ENCODE measurements at regions of chr19 and their contacts with region 1.

Region 1: GRCh38 chr19:8085598-8086408 is 33.2 kb downstream of the CCL25 start:
- DNase-seq: peak; percentile 91 to 94 (median 92)
- ATAC-seq: peak; percentile 91
- H3K4me3 ChIP-seq: peak overlapping the region; percentile 31
- H3K27ac ChIP-seq: peak overlapping the region; percentile 84
- H3K4me1 ChIP-seq: peaks cover 15 to 51% of the 10 kb centered on the region in 2 experiments
- H3K27me3 ChIP-seq: no peaks in the 10 kb centered on the region
- CTCF ChIP-seq: no peak
- EP300 ChIP-seq: peak; percentile 58
- POLR2A ChIP-seq: peak; percentile 65
- RAD21 ChIP-seq: no peak

Region 2: GRCh38 chr19:8141726-8142512 is 56.1 kb after region 1 on chr19:
- CTCF ChIA-PET with region 1: no interaction called
- POLR2A ChIA-PET with region 1: no interaction called
- in situ Hi-C with region 1: no loop called
- intact Hi-C with region 1: loop called (anchors 5 kb)
- DNase-seq: no peak
- ATAC-seq: no peak
- H3K4me3 ChIP-seq: no peak overlapping the region
- H3K27ac ChIP-seq: no peak overlapping the region
- H3K4me1 ChIP-seq: peaks cover 2 to 22% of the 10 kb centered on the region in 2 experiments; a peak in 3 of 5 replicates
- H3K27me3 ChIP-seq: peaks cover 12 to 38% of the 10 kb centered on the region in 2 experiments
- CTCF ChIP-seq: no peak
- EP300 ChIP-seq: no peak
- POLR2A ChIP-seq: no peak
- RAD21 ChIP-seq: no peak